GM12878 (cell line): ENCODE measurements at regions of chr10 and their contacts with region 1.

Region 1: DNA sequence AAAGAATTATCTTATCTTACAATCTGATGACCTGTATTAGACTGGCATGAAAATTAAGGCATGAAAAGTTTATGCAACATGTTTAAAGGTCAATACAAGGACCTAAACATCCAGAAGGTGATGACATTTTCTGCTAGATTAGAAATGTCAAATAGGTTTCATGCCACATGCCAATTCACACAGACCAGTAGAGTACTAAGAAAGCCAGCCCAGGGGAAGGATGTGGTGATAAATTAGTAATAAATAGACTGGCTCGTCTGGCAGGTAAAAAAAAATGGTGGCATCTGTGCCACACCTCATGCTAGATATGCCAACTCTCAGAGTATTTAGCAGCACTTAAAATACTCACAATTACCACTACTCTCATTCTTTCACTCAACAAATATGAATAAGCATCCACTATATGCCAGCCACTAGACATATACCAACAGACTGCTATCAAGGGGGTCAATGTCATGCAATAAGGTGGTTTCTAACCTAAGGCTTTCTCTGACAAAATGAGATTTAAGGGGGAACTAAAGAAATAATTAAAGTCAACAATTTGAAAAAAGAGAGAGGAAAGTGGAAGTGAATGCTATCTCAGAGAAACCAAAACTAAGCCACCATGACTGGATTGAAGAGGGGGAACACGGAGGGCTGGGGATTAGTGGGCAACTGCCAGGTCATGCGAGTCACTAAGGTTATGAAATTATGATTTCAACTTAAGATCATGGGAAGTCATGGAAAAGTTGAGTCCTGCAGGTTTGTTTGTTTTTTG is 83.5 kb downstream of the SGMS1 start:
- DNase-seq: no peak
- ATAC-seq: peak; percentile 72
- H3K4me3 ChIP-seq: peak overlapping the region; percentile 42; the same call in 1 of the 2 replicates
- H3K27ac ChIP-seq: peak overlapping the region; percentile 86
- H3K4me1 ChIP-seq: peaks cover 51% of the 10 kb centered on the region
- H3K27me3 ChIP-seq: no peaks in the 10 kb centered on the region
- CTCF ChIP-seq: no peak
- EP300 ChIP-seq: peak in 1 of 2 experiments; percentile 36; a peak in 2 of 4 replicates
- POLR2A ChIP-seq: no peak
- RAD21 ChIP-seq: no peak

Region 2: GRCh38 chr10:50250096-50250854 is 290.0 kb before region 1 on chr10:
- CTCF ChIA-PET with region 1: no interaction called
- POLR2A ChIA-PET with region 1: no interaction called
- RAD21 ChIA-PET with region 1: no interaction called
- SMC1A ChIA-PET with region 1: no interaction called
- in situ Hi-C with region 1: no loop called
- intact Hi-C with region 1: no loop called
- DNase-seq: no peak
- ATAC-seq: no peak
- H3K4me3 ChIP-seq: no peak overlapping the region
- H3K27ac ChIP-seq: no peak overlapping the region
- H3K4me1 ChIP-seq: no peaks in the 10 kb centered on the region
- H3K27me3 ChIP-seq: peaks cover 0 to 6% of the 10 kb centered on the region in 2 experiments; a peak in 3 of 4 replicates
- CTCF ChIP-seq: no peak
- EP300 ChIP-seq: no peak
- POLR2A ChIP-seq: no peak
- RAD21 ChIP-seq: no peak

Region 3: DNA sequence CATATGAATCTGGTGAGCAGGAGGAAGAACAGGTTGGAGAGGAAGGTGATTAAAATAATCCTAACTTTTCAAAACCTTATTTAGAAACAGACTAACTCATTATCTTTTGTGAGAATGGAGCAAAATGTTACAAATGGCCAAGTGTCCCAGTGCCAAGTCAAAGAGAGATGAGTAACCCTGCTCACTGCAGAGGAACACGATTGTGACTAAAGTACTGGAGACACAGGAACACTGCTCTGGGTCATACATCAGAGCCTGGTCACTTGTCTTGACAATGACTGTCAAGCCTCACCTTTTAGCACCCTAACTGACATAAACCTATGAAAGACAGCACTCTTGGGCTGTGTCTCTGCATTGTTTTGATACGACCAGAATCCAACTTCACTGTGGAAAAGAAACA is 25.3 kb before region 1 on chr10:
- CTCF ChIA-PET with region 1: interaction called, 23 read pairs
- POLR2A ChIA-PET with region 1: interaction called, 24 read pairs
- RAD21 ChIA-PET with region 1: interaction called, 32 read pairs
- SMC1A ChIA-PET with region 1: interaction called, 50 read pairs
- in situ Hi-C with region 1: no loop called
- intact Hi-C with region 1: no loop called
- DNase-seq: no peak
- ATAC-seq: no peak
- H3K4me3 ChIP-seq: no peak overlapping the region
- H3K27ac ChIP-seq: no peak overlapping the region
- H3K4me1 ChIP-seq: peaks cover 33% of the 10 kb centered on the region
- H3K27me3 ChIP-seq: no peaks in the 10 kb centered on the region
- CTCF ChIP-seq: no peak
- EP300 ChIP-seq: no peak
- POLR2A ChIP-seq: no peak
- RAD21 ChIP-seq: no peak

Region 4: DNA sequence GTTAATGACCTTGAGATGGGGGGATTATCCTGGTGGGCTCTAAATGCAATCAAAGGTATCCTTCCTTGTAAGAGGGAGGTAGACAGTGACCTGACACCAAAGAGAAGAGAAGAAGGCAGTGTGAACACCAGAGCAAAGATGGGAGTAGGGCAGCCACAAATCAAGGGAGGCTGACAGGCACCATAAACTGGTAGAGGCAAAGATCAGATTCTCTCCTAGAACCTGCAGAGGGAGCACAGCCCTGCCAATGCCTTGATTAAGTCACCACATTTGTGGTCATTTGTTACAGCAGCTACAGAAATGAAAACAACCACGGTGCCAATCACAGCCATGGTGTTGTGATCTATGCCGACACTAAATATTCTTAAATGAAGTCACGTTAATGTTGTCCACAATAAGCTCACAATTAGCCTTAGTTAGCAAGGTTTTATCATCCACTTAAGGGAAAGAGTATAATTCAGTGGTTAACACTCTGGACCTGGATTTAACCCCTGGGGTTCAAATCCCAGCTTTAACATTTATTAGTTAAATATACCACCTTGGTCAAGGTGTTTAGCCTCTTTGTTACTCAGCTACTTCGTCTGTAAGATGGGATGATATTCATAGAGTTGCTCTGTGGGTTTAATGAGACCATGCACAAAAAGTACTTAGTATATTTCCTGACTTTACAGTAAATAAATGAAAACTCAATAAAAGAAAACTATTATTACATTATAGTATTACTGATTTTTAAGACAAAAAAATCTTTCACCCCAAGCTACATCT is 12.7 kb after region 1 on chr10:
- CTCF ChIA-PET with region 1: interaction called, 9 read pairs
- POLR2A ChIA-PET with region 1: interaction called, 4 read pairs
- RAD21 ChIA-PET with region 1: interaction called, 3 read pairs
- SMC1A ChIA-PET with region 1: interaction called, 14 read pairs
- in situ Hi-C with region 1: no loop called
- intact Hi-C with region 1: no loop called
- DNase-seq: no peak
- ATAC-seq: peak; percentile 82
- H3K4me3 ChIP-seq: no peak overlapping the region
- H3K27ac ChIP-seq: no peak overlapping the region
- H3K4me1 ChIP-seq: no peaks in the 10 kb centered on the region
- H3K27me3 ChIP-seq: no peaks in the 10 kb centered on the region
- CTCF ChIP-seq: peak; percentile 27 to 33 (median 29); a peak in 3 of 6 replicates
- EP300 ChIP-seq: no peak
- POLR2A ChIP-seq: no peak
- RAD21 ChIP-seq: peak; percentile 22; the same call in 1 of the 2 replicates